Right ventricle myocardium inferior (tissue), 1 donor: ENCODE measurements at regions of chr9 and their contacts with region 1.

Region 1: GRCh38 chr9:109627041-109627440 is 128.9 kb upstream of the PTPN3 start:
- DNase-seq: no peak
- ATAC-seq: peak; percentile 90

Region 2: GRCh38 chr9:109585796-109586195 is 41.2 kb before region 1 on chr9:
- intact Hi-C with region 1: loop called (anchors 5 kb)
- DNase-seq: no peak
- ATAC-seq: no peak